ENCODE measurements at regions of chr3 and their contacts with region 1.

Region 1: GRCh38 chr3:180594631-180595558 is 7.1 kb upstream of the TTC14 start:
- DNase-seq: peak; percentile 55
- H3K4me3 Mint-ChIP-seq: no peak overlapping the region
- H3K27ac Mint-ChIP-seq: no peak overlapping the region
- H3K4me1 Mint-ChIP-seq: peaks cover 9% of the 10 kb centered on the region
- H3K27me3 Mint-ChIP-seq: no peaks in the 10 kb centered on the region
- CTCF ChIP-seq: peak; percentile 55

Region 2: DNA sequence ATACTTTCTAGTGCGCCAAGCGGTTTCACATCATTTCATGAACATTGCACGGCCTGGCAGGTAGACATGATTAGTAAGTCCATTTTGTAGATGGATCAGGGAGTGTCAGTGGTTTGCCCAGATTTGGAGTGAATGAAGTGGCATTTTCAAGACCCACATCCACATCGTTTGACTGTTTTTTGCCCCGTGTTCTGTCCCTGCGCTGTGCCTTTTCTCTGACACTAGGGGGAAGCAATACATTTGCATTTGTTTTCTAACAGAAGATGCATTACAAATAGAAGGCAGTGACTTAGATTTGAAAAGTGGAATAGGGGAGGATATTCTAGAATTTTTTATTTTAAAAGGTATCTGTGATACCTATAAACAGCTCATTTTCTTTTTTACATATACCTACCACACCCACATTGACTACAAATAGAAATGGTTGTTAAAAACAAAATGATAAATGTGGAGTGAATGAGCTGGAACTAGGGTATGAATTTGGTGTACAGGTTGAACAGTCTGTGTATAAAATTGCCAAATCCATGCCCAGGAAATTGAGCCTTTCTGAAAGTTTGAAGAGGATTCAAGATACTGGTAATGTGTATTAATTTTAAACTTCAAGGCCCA is 844.1 kb before region 1 on chr3:
- CTCF ChIA-PET with region 1: interaction called, 10 read pairs
- POLR2A ChIA-PET with region 1: no interaction called
- intact Hi-C with region 1: loop called (anchors 1 kb)
- DNase-seq: peak; percentile 42
- H3K4me3 Mint-ChIP-seq: no peak overlapping the region
- H3K27ac Mint-ChIP-seq: no peak overlapping the region
- H3K4me1 Mint-ChIP-seq: no peaks in the 10 kb centered on the region
- H3K27me3 Mint-ChIP-seq: no peaks in the 10 kb centered on the region
- CTCF ChIP-seq: peak; percentile 52

Region 3: DNA sequence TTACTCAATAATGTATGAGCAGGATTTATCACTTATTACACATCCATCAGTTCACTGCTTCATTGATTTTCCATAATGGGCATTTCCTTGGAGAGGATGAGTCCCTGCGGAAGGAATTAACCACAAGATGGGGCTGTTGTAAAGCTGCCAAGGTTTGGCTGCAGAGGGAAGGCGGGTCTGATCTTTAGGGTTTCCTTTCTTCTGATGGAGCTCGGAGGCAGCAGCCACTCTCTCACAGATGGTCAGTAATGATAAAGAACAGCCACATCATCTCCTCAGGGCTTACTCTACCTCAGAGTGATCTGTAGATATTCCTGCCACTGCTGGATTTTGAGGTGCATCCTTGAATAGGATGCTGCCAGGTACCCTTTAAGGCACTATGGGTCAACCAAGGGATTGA is 826.8 kb before region 1 on chr3:
- CTCF ChIA-PET with region 1: interaction called, 5 read pairs
- POLR2A ChIA-PET with region 1: no interaction called
- intact Hi-C with region 1: loop called (anchors 1 kb)
- DNase-seq: peak; percentile 69
- H3K4me3 Mint-ChIP-seq: no peak overlapping the region
- H3K27ac Mint-ChIP-seq: no peak overlapping the region
- H3K4me1 Mint-ChIP-seq: no peaks in the 10 kb centered on the region
- H3K27me3 Mint-ChIP-seq: no peaks in the 10 kb centered on the region
- CTCF ChIP-seq: peak; percentile 60

Region 4: DNA sequence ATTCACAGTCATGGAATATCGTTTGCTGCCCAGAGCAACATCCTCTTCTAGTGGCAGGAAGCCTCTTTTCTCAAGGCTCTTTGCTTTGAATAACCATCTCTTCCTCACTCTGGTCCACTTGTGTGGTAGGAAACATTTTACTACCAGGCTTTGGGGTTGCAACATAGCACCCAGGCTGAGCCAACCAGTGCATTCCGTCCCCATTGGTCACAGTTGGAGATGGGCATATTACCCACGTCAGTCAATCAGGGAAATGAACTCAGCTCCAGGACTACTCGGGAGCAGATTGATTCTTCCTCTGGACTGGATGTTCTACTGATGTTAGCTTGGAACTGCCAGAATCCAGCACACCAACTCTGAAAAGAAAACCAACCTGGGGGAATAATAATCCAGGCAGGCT is 553.9 kb before region 1 on chr3:
- CTCF ChIA-PET with region 1: no interaction called
- POLR2A ChIA-PET with region 1: no interaction called
- intact Hi-C with region 1: loop called (anchors 1 kb)
- DNase-seq: peak; percentile 69
- H3K4me3 Mint-ChIP-seq: no peak overlapping the region
- H3K27ac Mint-ChIP-seq: peak overlapping the region; percentile 86
- H3K4me1 Mint-ChIP-seq: peaks cover 29% of the 10 kb centered on the region
- H3K27me3 Mint-ChIP-seq: peaks cover 13% of the 10 kb centered on the region
- CTCF ChIP-seq: no peak

Region 5: GRCh38 chr3:180063810-180064209 is 531.1 kb before region 1 on chr3:
- CTCF ChIA-PET with region 1: interaction called, 5 read pairs
- POLR2A ChIA-PET with region 1: no interaction called
- intact Hi-C with region 1: loop called (anchors 10 kb)
- DNase-seq: peak; percentile 23
- H3K4me3 Mint-ChIP-seq: no peak overlapping the region
- H3K27ac Mint-ChIP-seq: no peak overlapping the region
- H3K4me1 Mint-ChIP-seq: peaks cover 11% of the 10 kb centered on the region
- H3K27me3 Mint-ChIP-seq: no peaks in the 10 kb centered on the region
- CTCF ChIP-seq: no peak